Tibial artery (tissue), 4 donors: ENCODE measurements at regions of chr2 and their contacts with region 1.

Region 1: GRCh38 chr2:196441527-196441926 is 198.0 kb upstream of the CCDC150 start:
- DNase-seq: no peak
- H3K4me3 ChIP-seq: no peak overlapping the region
- H3K27ac ChIP-seq: no peak overlapping the region
- H3K4me1 ChIP-seq: no peaks in the 10 kb centered on the region
- H3K27me3 ChIP-seq: no peaks in the 10 kb centered on the region
- CTCF ChIP-seq: no peak

Region 2: DNA sequence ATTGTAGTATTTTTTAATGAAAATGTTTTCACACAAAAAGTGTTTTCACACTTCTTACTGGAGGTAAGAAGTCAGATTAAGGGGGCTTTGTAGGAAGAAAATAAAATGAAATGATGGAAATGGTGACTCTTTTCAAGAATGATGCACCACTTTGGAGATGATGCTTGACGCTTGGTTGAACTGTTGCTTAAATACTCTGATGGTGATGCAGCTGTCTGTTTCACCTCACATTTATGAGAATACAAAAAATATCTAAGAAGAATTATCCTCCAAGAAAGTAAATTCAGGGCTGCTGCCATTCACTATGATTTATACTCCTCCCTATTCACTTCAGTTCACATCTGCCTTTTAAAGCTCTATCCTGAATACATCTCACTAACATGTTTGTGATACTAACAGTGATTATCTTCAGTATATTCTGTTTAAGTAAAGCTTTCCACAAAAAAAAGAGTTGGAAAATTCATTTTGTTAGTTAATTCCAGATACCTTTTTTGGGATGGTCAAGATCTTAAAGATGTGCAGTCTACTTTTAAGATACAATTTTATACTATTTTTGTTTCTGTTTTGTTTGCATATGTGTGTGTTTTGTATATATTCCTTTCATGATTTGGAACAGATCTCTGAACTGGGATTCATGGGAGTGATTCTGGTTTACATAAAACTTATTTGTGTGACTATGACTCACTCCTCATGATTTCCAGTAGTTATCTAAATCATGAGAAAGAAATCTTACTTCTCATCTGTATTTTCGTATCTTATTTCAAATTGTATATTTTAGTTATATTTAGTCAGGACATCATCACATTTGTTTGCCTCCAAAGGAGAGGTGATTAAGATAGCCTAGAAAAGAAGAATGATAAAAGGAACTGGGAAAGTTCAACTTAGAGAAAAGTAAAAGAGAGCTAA is 731.4 kb before region 1 on chr2:
- intact Hi-C with region 1: no loop called
- DNase-seq: no peak
- H3K4me3 ChIP-seq: no peak overlapping the region
- H3K27ac ChIP-seq: no peak overlapping the region
- H3K4me1 ChIP-seq: no peaks in the 10 kb centered on the region
- H3K27me3 ChIP-seq: no peaks in the 10 kb centered on the region
- CTCF ChIP-seq: no peak

Region 3: GRCh38 chr2:197239434-197239833 is 797.9 kb after region 1 on chr2:
- intact Hi-C with region 1: loop called (anchors 10 kb)
- DNase-seq: no peak
- H3K4me3 ChIP-seq: no peak overlapping the region
- H3K27ac ChIP-seq: no peak overlapping the region
- H3K4me1 ChIP-seq: peaks cover 0 to 26% (median 6%) of the 10 kb centered on the region in 4 donors
- H3K27me3 ChIP-seq: no peaks in the 10 kb centered on the region
- CTCF ChIP-seq: no peak

Region 4: DNA sequence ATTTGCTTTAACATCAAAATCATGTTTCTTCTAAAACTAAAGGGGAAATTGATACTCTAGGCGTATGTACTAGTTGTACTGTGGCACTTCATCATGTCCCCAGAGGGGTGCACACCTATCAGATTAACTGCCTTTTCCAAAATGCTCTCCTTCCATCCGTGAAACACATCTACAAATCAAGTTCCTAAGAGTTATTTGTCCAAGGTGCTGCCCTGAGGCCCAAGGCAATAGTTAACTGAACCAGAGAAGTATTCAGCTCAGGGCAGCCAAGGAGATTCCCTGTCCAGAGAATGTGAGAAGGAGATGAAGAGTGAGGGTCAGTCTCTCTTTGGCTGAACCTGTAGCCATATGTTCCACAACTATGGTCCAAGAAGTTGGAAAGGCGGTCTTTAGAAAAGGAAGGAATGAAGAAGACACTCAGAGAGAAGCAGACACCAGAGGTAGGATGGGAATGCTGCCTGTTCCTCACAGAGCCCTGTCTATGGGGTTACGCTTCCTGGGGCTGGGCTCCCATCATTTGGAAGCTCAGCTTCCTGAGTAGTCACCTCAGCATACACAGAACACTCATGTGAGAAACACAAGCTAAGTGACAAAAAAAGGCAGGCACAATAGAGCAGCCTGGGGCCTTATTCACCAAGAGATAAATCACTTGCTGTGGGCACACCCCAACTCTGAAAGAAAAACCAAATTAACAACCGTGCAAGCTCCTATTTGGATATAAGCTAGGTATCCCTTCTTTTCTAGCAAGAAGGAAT is 813.4 kb after region 1 on chr2:
- intact Hi-C with region 1: no loop called
- DNase-seq: no peak
- H3K4me3 ChIP-seq: peak overlapping the region in 1 of 2 donors; percentile 25
- H3K27ac ChIP-seq: peak overlapping the region; percentile 41 to 52
- H3K4me1 ChIP-seq: peaks cover 0 to 26% (median 7%) of the 10 kb centered on the region in 4 donors
- H3K27me3 ChIP-seq: no peaks in the 10 kb centered on the region
- CTCF ChIP-seq: no peak